Right ventricle myocardium superior (tissue), 1 donor: ENCODE measurements at regions of chr2 and their contacts with region 1.

Region 1: GRCh38 chr2:236512902-236513435 is 56.7 kb upstream of the ACKR3 start:
- DNase-seq: peak; percentile 79
- ATAC-seq: peak; percentile 95

Region 2: GRCh38 chr2:236221798-236222197 is 291.2 kb before region 1 on chr2:
- intact Hi-C with region 1: no loop called
- DNase-seq: no peak
- ATAC-seq: no peak

Region 3: GRCh38 chr2:236352761-236353593 is 160.0 kb before region 1 on chr2:
- intact Hi-C with region 1: loop called (anchors 10 kb)
- DNase-seq: no peak
- ATAC-seq: peak; percentile 53

Region 4: DNA sequence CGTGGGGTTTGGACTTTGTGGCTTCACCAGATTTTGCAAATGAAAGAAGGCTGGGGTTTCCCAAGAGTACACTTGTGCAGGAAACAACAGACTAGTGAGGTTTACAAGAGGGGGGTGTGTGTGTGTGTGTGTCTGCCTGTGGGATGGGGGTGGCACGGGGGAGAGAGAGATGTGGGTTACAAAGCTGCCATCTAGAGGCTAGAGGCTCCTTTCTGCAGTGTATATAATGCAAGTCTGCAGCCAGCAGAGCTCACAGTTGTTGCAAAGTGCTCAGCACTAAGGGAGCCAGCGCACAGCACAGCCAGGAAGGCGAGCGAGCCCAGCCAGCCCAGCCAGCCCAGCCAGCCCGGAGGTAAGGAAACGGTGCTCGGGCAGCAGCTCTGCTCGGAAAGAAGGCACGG is 56.6 kb after region 1 on chr2 and contains the start of gene ACKR3:
- intact Hi-C with region 1: loop called (anchors 5 kb)
- DNase-seq: peak; percentile 84
- ATAC-seq: peak; percentile 76
- total RNA-seq, gene ACKR3: 27.9 TPM

Region 5: DNA sequence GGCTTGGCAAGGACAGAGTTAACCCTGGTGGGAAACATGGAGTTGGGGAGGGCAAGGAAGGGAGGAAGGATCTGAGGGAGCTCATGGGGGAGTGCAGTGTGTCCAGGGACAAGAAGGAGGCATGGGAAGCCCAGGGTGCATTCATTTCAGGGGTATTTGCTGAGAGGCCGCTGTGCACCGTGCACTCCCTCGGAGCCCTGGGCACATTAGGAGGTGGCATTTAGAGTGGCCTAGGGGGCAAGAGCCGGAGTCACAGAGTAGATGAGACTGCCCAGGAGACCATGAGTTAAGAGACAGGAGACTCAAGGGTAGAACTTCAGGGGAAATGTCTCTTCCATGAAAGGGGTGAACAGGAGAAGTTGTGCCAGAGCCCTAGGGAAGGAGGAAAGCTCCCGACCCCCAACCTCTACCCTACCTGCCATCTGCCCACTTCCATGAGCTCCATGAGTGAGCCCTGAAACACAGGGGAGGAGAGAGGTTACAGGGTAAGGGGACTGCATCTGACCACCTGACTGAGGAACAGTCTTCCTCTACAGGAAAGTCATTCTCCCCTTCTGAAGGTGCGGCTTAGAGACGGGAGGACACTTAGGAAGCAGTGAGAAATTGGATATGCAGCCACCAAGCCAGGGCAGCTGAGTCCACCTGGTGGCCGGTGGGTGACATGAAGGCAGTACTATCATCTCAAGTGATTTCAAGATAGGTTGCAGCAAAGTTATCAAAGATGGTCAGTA is 514.2 kb after region 1 on chr2:
- intact Hi-C with region 1: loop called (anchors 5 kb)
- DNase-seq: peak; percentile 87
- ATAC-seq: peak; percentile 94